Mammary epithelial cell (primary cell): ENCODE measurements at regions of chr10 and their contacts with region 1.

Region 1: GRCh38 chr10:71899665-71900412 is 48.8 kb upstream of the PSAP start:
- DNase-seq: no peak
- H3K4me3 ChIP-seq: no peak overlapping the region
- H3K27ac ChIP-seq: no peak overlapping the region
- H3K4me1 ChIP-seq: peaks cover 4% of the 10 kb centered on the region
- H3K27me3 ChIP-seq: no peaks in the 10 kb centered on the region
- CTCF ChIP-seq: no peak

Region 2: GRCh38 chr10:71390461-71390835 is 509.4 kb before region 1 on chr10:
- CTCF ChIA-PET with region 1: no interaction called
- dilution Hi-C with region 1: no loop called
- in situ Hi-C with region 1: no loop called
- intact Hi-C with region 1: loop called (anchors 5 kb)
- DNase-seq: no peak
- H3K4me3 ChIP-seq: no peak overlapping the region
- H3K27ac ChIP-seq: no peak overlapping the region
- H3K4me1 ChIP-seq: no peaks in the 10 kb centered on the region
- H3K27me3 ChIP-seq: no peaks in the 10 kb centered on the region
- CTCF ChIP-seq: no peak

Region 3: DNA sequence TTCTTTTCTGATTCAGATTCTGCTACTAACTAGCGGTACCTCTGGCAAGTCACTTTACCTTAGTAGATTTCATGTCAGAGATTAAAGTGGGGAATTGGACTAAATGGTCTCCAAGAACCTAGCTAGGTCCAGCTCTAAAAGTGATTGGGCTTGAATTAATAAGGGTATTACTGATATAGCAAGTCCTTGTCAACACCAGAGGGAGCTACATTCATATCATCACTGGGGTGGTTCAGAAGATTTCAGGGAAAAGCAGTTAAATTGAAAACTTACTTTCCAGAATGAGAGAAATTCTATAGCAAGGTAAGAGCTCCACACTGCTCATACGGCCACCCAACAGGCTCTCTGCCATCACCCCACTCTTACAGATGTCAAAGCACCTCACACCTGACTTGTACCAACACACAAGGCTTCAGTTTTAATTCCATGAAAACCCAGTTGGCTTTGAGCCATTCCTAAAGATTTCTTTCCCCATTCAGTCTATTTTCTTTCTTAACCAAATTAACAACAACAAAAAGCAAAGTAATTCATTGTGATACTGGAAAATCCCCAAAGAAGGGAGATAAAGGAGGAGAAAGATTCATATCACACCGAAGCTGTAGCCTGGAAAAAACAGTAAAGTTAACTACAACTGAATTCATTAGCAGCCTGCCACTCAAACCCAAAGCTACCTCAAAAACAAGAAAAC is 226.5 kb after region 1 on chr10:
- CTCF ChIA-PET with region 1: interaction called, 4 read pairs
- dilution Hi-C with region 1: no loop called
- in situ Hi-C with region 1: no loop called
- intact Hi-C with region 1: loop called (anchors 5 kb)
- DNase-seq: peak; percentile 25
- H3K4me3 ChIP-seq: no peak overlapping the region
- H3K27ac ChIP-seq: no peak overlapping the region
- H3K4me1 ChIP-seq: no peaks in the 10 kb centered on the region
- H3K27me3 ChIP-seq: no peaks in the 10 kb centered on the region
- CTCF ChIP-seq: peak; percentile 36 to 51

Region 4: GRCh38 chr10:72215652-72216549 is 316.1 kb after region 1 on chr10 and contains the starts of genes ANAPC16 and ASCC1:
- CTCF ChIA-PET with region 1: interaction called, 4 read pairs
- dilution Hi-C with region 1: no loop called
- in situ Hi-C with region 1: loop called in 1 of 2 experiments (anchors 25 kb)
- intact Hi-C with region 1: loop called (anchors 5 kb)
- DNase-seq: peak; percentile 93
- H3K4me3 ChIP-seq: peak within 1 kb of the TSS; percentile 74 to 89 (median 87)
- H3K27ac ChIP-seq: peak within 1 kb of the TSS; percentile 91
- H3K4me1 ChIP-seq: peaks cover 13% of the 10 kb centered on the region
- H3K27me3 ChIP-seq: no peaks in the 10 kb centered on the region
- CTCF ChIP-seq: no peak
- total RNA-seq, gene ANAPC16: 66.4 to 87.2 TPM
- total RNA-seq, gene ASCC1: 40.2 to 54.5 TPM